Right cardiac atrium (tissue), 5 donors: ENCODE measurements at regions of chr6 and their contacts with region 1.

Region 1: DNA sequence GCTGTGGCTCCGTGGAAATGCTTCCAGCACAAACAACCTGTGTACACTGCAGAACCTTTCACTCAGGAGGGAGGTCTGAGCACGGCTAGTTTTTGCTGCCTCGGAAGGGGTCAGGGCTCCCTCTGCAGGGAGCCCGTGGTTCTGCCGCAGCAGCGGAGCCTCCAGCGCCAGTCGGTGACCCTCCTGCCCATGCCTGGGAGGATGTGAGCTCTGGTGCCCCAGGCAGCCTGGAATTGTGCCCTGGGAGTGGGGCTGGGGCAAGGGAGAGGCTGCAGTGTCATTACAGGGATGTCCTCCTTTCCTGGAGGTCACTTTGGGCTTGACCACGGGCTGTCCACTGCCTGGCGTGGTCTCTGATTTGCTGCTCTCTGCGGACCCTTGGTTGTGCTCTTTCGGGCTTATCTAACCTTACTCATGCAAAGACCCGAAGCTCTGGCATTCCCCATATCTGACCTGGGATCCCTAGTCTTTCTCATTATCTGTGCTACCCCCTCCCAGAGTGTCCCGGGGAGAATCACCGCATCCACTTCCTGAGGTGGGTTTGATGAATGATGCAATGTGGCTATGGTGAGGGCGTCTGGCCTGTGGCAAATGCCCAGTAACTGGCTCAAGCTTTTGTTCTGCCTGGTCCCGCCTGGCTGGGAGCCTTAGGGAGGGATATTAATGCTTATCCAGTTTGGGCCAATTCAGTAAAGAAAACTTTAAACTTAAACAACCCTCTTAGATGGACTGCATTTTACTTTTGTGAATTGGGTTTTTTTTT is 59.6 kb upstream of the TAGAP start:
- DNase-seq: peak; percentile 46 to 85 (median 81)
- ATAC-seq: peak; percentile 83 to 84
- H3K4me3 ChIP-seq: no peak overlapping the region
- H3K27ac ChIP-seq: no peak overlapping the region
- H3K4me1 ChIP-seq: peaks cover 3% of the 10 kb centered on the region
- H3K27me3 ChIP-seq: no peaks in the 10 kb centered on the region

Region 2: GRCh38 chr6:158704181-158704822 is 400.0 kb before region 1 on chr6:
- intact Hi-C with region 1: loop called in 1 of 4 experiments (anchors 10 kb)
- DNase-seq: peak; percentile 88 to 95 (median 95)
- ATAC-seq: peak; percentile 89 to 90
- H3K4me3 ChIP-seq: peak overlapping the region; percentile 15
- H3K27ac ChIP-seq: peak overlapping the region; percentile 3
- H3K4me1 ChIP-seq: peaks cover 10% of the 10 kb centered on the region
- H3K27me3 ChIP-seq: no peaks in the 10 kb centered on the region

Region 3: DNA sequence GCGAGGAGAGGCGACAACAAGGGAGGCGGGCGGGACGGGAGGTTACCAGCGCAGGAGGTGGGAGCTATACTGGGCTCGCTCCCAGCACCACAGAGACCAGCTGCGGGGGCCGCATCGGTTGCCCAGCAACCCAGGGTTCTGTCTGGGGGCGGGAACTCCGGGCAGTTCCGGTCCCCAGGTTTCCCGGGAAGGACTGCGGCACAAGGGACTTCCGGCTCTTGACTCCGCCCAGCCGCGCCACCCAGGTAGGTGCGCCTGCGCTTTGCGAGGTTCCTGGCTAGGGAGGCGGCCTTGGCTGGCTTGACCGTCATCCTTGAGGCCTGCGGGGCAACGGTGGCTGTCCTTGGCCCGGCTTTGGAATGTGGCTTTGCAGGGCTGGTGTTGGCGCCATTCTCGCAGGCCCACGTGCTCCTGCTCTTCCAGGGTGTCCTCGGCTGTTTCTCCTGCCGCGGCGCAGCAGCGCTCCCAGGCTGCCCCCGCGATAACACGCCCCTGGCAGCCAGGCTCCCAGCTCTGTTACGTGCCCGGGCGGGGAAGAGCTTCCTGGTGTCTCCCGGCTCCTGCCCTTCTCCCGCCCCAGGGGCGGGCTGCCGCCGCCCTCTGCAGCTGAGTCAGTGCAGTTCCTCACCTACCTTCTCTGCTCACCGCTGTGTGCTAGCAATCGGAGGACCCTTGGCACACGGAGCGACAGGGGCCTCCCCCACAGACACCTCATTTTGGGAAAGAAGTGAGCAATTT is 104.5 kb before region 1 on chr6 and contains the start of gene RSPH3:
- intact Hi-C with region 1: loop called in 1 of 4 experiments (anchors 10 kb)
- DNase-seq: peak; percentile 93 to 97 (median 97)
- ATAC-seq: peak; percentile 97
- H3K4me3 ChIP-seq: peak within 1 kb of the TSS; percentile 51
- H3K27ac ChIP-seq: peak within 1 kb of the TSS; percentile 71
- H3K4me1 ChIP-seq: no peaks in the 10 kb centered on the region
- H3K27me3 ChIP-seq: no peaks in the 10 kb centered on the region
- total RNA-seq, gene RSPH3: 9.6 to 12.1 (median 11.2) TPM

Region 4: DNA sequence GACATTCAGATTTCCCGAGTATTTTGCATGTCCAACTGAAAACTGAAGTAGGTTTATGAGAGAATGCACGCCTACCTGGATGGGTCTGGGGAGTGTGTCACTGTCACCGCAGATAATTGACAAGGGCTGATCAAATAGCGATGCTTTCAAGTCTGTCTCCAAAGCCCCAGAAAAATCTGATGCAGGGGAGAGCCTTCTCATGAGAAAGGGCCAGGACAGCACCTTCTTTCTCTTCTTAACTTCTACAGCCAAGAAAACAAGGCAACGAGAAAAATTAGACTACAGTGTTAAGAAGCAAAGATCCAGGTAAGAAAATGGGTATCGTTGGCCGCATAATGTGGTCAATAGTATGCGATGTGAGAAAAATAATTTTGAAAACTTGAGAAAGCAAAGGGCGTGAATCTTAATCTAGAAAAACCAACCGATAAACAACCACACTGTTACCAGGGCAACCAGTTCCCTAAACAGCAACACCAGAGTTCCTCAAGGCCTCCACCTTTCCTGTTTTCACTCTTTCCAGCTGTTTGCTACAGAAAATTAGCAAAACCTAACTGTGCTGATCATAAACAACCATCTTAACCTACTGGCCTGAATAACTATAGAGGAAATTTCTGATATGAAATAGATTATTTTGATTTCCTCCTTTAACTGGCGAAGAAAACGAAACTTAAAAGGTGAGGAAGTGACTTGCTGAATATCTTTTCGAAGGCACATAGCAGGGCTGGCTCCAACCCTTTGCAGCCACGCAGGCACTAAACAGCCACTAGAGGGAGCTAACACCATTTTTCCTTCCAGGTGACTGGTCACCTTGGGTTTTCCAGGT is 62.1 kb before region 1 on chr6:
- intact Hi-C with region 1: loop called in 2 of 4 experiments (anchors 5 to 10 kb)
- DNase-seq: peak in 2 of 3 donors; percentile 36 to 59
- ATAC-seq: peak; percentile 77 to 82
- H3K4me3 ChIP-seq: peak overlapping the region; percentile 35
- H3K27ac ChIP-seq: no peak overlapping the region
- H3K4me1 ChIP-seq: no peaks in the 10 kb centered on the region
- H3K27me3 ChIP-seq: no peaks in the 10 kb centered on the region